ENCODE measurements at regions of chr17 and their contacts with region 1.

Region 1: DNA sequence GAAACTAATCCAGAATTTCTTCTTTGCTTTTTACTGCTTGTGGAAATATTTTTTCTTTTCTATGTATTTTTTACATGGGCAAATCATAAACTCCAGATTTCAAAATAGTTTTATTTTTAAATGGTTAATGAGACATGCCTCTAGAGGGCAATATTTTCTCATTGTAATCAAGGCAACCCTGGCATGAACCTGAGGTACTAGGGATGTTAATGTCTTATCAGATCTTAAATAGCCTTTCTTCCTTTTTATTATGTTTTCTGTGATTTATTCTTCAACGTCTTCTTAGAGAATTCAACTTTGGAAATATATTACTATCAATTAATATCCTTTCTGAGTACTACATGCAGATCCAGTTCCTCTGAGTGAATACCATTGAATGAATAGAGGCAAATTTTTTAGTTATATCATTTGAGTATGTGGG is 324.7 kb downstream of the BCAS3 start:
- DNase-seq: peak; percentile 81
- ATAC-seq: peak; percentile 42; the same call in 1 of the 2 replicates
- H3K4me3 ChIP-seq: no peak overlapping the region
- H3K27ac ChIP-seq: no peak overlapping the region
- H3K4me1 ChIP-seq: no peaks in the 10 kb centered on the region
- H3K27me3 ChIP-seq: no peaks in the 10 kb centered on the region
- CTCF ChIP-seq: peak; percentile 87

Region 2: DNA sequence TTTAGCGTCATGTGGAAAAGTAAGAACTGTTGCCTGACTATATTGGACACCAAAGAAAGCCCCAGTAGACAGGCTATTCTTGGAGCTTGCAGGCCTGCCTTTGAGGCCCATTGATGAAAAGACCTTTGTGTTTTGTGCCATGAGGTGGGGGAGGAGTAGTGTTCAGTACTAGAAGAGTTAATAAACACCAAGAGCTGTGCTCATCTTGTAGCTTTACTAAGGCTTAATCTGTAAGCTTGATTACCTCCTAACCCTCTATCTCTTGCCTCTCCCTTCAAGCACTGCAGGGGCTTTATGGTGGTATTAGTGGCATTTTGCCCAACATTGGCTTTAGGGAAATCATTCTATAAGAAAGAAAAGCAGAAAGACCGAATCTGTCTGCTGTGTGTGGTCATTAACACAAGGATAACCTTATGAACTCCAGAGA is 177.1 kb after region 1 on chr17:
- CTCF ChIA-PET with region 1: no interaction called
- POLR2A ChIA-PET with region 1: no interaction called
- intact Hi-C with region 1: no loop called
- DNase-seq: no peak
- ATAC-seq: no peak
- H3K4me3 ChIP-seq: no peak overlapping the region
- H3K27ac ChIP-seq: no peak overlapping the region
- H3K4me1 ChIP-seq: no peaks in the 10 kb centered on the region
- H3K27me3 ChIP-seq: no peaks in the 10 kb centered on the region
- CTCF ChIP-seq: no peak

Region 3: DNA sequence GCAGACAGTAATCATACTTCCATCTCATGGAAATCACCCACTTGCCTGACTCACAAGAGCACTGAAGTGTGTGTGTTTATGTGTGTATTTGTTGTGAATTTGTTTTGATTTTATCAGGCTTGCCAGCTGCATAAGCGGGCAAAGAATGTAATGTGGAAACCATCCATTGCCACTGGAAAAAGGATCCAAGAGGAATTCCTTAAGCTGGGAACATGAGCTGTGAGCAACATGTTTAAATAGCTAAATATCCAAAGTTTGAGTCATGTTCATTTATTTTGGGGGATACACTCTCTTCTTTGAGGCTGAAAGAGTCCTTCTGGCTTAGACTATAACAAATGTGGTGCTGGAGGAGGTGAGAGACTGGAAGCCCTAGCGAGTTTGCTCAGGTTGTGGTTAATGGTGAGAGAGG is 198.9 kb after region 1 on chr17:
- CTCF ChIA-PET with region 1: no interaction called
- POLR2A ChIA-PET with region 1: no interaction called
- intact Hi-C with region 1: loop called (anchors 5 kb)
- DNase-seq: peak; percentile 95
- ATAC-seq: peak; percentile 89
- H3K4me3 ChIP-seq: no peak overlapping the region
- H3K27ac ChIP-seq: peak overlapping the region; percentile 61
- H3K4me1 ChIP-seq: peaks cover 36% of the 10 kb centered on the region
- H3K27me3 ChIP-seq: no peaks in the 10 kb centered on the region
- CTCF ChIP-seq: no peak

Region 4: DNA sequence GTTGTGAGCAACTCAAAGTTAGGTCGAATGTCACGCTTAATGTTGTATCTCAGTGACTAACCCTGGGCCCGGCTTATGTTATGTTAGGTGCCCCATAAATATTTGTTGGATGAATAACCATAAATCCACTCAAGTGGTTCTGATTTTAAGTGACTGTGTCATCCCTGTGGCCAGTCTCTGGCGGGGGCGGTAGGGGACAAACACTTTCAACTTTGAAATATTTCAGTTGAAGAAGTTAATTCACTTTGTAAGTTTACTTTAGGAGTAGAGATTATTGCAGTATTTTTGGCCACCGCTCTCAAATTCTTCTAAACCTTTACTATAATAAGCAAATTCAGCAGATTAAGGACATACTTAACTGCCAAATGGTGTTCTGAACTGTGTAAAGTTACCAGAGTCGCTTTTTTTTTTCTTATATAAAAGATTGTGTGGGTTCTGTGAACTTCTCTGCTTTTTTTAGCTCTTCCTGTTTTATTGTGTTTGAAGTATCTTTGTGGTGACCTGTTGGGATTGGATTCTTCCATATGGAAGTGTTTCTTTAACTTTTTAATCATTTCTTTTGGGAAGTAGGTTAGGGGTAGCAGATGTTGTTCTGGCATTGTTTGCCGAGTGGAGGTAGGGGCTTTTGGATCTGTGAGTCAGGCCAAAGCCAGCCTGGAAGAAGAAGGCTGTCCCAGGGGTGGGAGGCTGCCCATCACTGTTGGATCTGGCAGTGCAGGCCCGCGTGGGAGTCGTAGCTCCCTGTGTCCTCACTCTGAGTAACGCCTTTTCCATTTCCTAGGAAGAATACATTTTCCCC is 335.9 kb after region 1 on chr17:
- CTCF ChIA-PET with region 1: no interaction called
- POLR2A ChIA-PET with region 1: no interaction called
- intact Hi-C with region 1: loop called (anchors 5 kb)
- DNase-seq: peak; percentile 99
- ATAC-seq: peak; percentile 76
- H3K4me3 ChIP-seq: peak overlapping the region; percentile 46; the same call in 1 of the 2 replicates
- H3K27ac ChIP-seq: peak overlapping the region; percentile 93
- H3K4me1 ChIP-seq: peaks cover 64% of the 10 kb centered on the region
- H3K27me3 ChIP-seq: no peaks in the 10 kb centered on the region
- CTCF ChIP-seq: no peak

Region 5: DNA sequence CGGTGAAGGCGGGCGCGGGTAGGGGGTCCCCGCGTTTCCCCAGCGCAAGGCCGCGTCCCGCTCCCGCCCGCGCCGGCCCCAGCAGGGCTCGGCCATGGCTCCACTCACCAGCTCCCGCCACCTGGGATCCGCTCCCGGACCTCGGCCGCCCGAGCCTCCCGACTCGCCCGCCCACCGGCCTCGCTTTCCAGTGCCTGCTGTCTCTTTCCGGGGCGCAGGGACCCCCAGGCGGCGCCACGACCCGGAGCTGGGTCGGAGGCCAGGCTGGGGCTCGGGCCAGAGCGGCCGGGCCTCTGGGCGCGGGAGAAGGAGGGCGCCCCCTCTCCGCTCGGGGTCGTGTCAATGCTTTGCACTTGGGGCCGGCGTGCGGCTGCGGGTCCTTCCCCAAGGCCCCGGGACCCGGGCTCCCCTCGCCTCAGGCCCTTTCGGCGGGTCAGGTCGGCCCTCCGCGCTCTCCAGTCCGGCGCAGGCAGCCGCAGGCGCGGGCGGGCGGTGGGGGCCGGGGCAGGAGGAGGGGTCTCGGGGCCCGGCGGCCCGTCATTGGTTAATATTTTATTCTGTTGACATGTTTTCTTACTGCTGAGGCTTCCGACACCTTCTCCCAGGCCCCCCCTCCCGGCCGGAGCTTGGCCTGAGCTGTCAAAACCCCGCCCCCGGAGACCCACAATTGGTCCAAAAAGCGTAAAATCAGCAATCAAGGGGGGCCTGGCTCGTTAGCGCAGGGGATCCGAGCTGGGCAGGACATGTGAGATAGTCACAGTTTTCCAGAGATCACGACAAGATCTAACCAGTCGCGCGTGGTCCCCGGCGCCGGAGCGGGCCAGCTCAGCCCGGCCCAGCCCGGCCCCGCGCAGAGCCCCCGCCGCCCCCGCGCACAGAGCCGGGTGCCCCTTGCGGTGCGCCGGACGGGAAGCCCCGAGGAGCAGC is 397.1 kb after region 1 on chr17 and contains the start of gene TBX2:
- CTCF ChIA-PET with region 1: no interaction called
- POLR2A ChIA-PET with region 1: no interaction called
- intact Hi-C with region 1: loop called (anchors 2 kb)
- DNase-seq: peak; percentile 85
- ATAC-seq: peak; percentile 68
- H3K4me3 ChIP-seq: peak within 1 kb of the TSS; percentile 72
- H3K27ac ChIP-seq: no peak within 1 kb of the TSS
- H3K4me1 ChIP-seq: peaks cover 20% of the 10 kb centered on the region
- H3K27me3 ChIP-seq: no peaks in the 10 kb centered on the region
- CTCF ChIP-seq: 0 out of 2 replicates have a peak, but pooled peaks have one; percentile 12
- total RNA-seq, gene TBX2: 7.1 and 8.5 TPM in 2 replicates